Calu3 (cell line): ENCODE measurements at regions of chr10 and their contacts with region 1.

Region 1: GRCh38 chr10:55263327-55263726 is 462.3 kb upstream of the PCDH15 start:
- DNase-seq: no peak
- H3K4me3 Mint-ChIP-seq: no peak overlapping the region
- H3K27ac Mint-ChIP-seq: no peak overlapping the region
- H3K4me1 Mint-ChIP-seq: no peaks in the 10 kb centered on the region
- H3K27me3 Mint-ChIP-seq: no peaks in the 10 kb centered on the region
- CTCF ChIP-seq: no peak

Region 2: DNA sequence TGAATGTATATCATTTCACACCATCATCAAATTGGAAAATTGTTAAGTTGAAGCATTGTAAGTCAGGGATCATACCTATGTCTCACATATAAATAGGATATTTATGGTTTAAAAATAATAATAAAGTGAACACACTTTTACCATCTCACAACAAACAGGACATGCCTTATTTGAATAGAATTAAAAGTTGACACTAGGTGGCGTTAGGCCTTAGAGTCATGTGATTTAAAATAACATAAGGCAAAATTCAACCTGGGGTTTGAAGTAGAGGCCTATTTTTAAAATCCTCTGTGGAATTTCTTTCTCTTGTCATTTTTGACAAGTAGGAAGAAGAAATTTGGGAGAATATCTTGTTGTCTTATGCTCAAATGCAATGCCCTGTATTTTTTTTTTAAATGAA is 277.6 kb before region 1 on chr10:
- CTCF ChIA-PET with region 1: no interaction called
- intact Hi-C with region 1: loop called (anchors 2 kb)
- DNase-seq: no peak
- H3K4me3 Mint-ChIP-seq: no peak overlapping the region
- H3K27ac Mint-ChIP-seq: no peak overlapping the region
- H3K4me1 Mint-ChIP-seq: no peaks in the 10 kb centered on the region
- H3K27me3 Mint-ChIP-seq: no peaks in the 10 kb centered on the region
- CTCF ChIP-seq: peak; percentile 41